WTC11 (cell line): ENCODE measurements at regions of chr15 and their contacts with region 1.

Region 1: DNA sequence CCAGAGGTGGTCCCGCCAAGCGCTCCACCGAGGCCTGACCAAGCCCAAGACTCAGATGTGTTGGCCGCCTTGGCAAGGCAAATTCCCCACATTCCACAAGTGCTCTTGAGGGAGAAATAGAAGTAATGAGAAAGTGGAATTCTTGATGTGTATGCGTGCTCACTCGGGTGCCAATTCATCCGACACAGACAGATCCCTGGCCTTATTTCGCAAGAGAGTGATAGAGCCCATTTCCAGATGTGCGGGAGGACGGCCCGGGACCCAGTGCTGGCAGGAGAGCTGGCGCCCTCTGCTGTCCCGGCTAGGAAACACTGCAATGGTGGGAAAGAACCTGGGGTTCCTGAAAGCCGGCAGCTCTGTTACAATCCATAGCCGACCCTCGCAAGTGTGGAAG is 76.0 kb downstream of the HMG20A start:
- DNase-seq: peak; percentile 91
- ATAC-seq: peak; percentile 87
- H3K4me3 Mint-ChIP-seq: no peak overlapping the region
- H3K27ac Mint-ChIP-seq: peak overlapping the region; percentile 91
- H3K4me1 Mint-ChIP-seq: peaks cover 57% of the 10 kb centered on the region
- H3K27me3 Mint-ChIP-seq: no peaks in the 10 kb centered on the region; the same call in 1 of the 2 replicates
- CTCF ChIP-seq: peak; percentile 91

Region 2: GRCh38 chr15:77107531-77108355 is 389.0 kb before region 1 on chr15:
- CTCF ChIA-PET with region 1: interaction called, 15 read pairs
- POLR2A ChIA-PET with region 1: no interaction called
- DNase-seq: peak; percentile 79
- ATAC-seq: peak; percentile 94
- H3K4me3 Mint-ChIP-seq: no peak overlapping the region
- H3K27ac Mint-ChIP-seq: peak overlapping the region; percentile 95
- H3K4me1 Mint-ChIP-seq: peaks cover 10% of the 10 kb centered on the region
- H3K27me3 Mint-ChIP-seq: no peaks in the 10 kb centered on the region
- CTCF ChIP-seq: peak; percentile 59

Region 3: GRCh38 chr15:77118882-77119321 is 377.8 kb before region 1 on chr15:
- CTCF ChIA-PET with region 1: interaction called, 49 read pairs
- POLR2A ChIA-PET with region 1: no interaction called
- DNase-seq: no peak
- ATAC-seq: peak; percentile 68
- H3K4me3 Mint-ChIP-seq: no peak overlapping the region
- H3K27ac Mint-ChIP-seq: no peak overlapping the region
- H3K4me1 Mint-ChIP-seq: peaks cover 28% of the 10 kb centered on the region
- H3K27me3 Mint-ChIP-seq: no peaks in the 10 kb centered on the region
- CTCF ChIP-seq: peak; percentile 35

Region 4: GRCh38 chr15:77358545-77359240 is 138.0 kb before region 1 on chr15:
- CTCF ChIA-PET with region 1: no interaction called
- POLR2A ChIA-PET with region 1: no interaction called
- DNase-seq: no peak
- ATAC-seq: no peak
- H3K4me3 Mint-ChIP-seq: no peak overlapping the region
- H3K27ac Mint-ChIP-seq: no peak overlapping the region
- H3K4me1 Mint-ChIP-seq: no peaks in the 10 kb centered on the region
- H3K27me3 Mint-ChIP-seq: no peaks in the 10 kb centered on the region
- CTCF ChIP-seq: no peak

Region 5: GRCh38 chr15:77419836-77420609 is 76.7 kb before region 1 on chr15 and contains the start of gene PEAK1:
- CTCF ChIA-PET with region 1: interaction called, 14 read pairs
- POLR2A ChIA-PET with region 1: no interaction called
- DNase-seq: peak; percentile 100
- ATAC-seq: peak; percentile 97
- H3K4me3 Mint-ChIP-seq: peak within 1 kb of the TSS; percentile 98
- H3K27ac Mint-ChIP-seq: peak within 1 kb of the TSS; percentile 99
- H3K4me1 Mint-ChIP-seq: peaks cover 46% of the 10 kb centered on the region
- H3K27me3 Mint-ChIP-seq: no peaks in the 10 kb centered on the region; the same call in 1 of the 2 replicates
- CTCF ChIP-seq: no peak
- total RNA-seq, gene PEAK1: 49.0 to 51.1 TPM (median 49.7 TPM) in 3 replicates

Region 6: GRCh38 chr15:77475898-77476297 is 20.8 kb before region 1 on chr15:
- CTCF ChIA-PET with region 1: interaction called, 11 read pairs
- POLR2A ChIA-PET with region 1: no interaction called
- DNase-seq: peak; percentile 34
- ATAC-seq: peak; percentile 85
- H3K4me3 Mint-ChIP-seq: no peak overlapping the region
- H3K27ac Mint-ChIP-seq: no peak overlapping the region
- H3K4me1 Mint-ChIP-seq: peaks cover 41% of the 10 kb centered on the region
- H3K27me3 Mint-ChIP-seq: no peaks in the 10 kb centered on the region
- CTCF ChIP-seq: no peak

Region 7: DNA sequence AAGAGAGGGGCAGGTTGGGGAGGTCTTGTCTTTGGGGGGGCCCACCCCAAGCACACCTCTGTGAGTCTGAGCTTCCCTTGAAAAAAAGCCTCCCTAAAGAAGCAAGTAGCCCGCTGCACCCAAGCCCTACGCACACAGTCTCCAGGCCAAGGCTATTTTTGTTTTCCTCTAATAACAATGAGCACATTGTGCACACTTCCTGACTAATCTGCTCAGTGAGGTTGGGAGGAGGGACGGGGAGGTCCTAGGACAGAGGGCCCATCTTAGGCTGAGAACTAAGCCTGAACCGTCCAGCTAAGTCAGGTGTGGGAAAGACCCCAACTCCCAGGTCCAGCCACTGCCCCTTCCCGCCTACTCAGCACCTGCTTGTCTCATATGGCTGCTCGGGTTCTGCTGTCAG is 11.2 kb after region 1 on chr15:
- CTCF ChIA-PET with region 1: interaction called, 67 read pairs
- POLR2A ChIA-PET with region 1: no interaction called
- DNase-seq: no peak
- ATAC-seq: no peak
- H3K4me3 Mint-ChIP-seq: no peak overlapping the region
- H3K27ac Mint-ChIP-seq: no peak overlapping the region
- H3K4me1 Mint-ChIP-seq: peaks cover 90% of the 10 kb centered on the region
- H3K27me3 Mint-ChIP-seq: no peaks in the 10 kb centered on the region
- CTCF ChIP-seq: no peak

Region 8: DNA sequence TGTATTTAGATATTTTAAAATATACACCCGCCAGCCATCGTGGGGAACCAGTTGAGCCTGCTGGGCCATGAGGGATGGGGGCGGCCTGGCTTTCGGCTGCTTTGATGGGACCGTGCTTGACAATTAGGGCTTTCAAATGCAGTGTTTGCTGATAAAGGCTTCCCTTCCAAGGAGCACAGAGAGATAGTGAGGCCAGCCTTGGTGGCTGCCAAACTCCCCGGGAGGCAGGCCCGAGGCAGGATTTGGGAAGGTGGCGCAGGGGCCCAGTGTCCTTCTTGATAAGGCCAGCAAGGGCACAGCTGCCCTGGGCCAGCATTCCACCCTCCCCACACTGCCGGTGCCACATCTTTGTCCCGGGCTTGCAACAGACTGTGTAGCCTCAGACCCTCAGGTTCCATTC is 60.4 kb after region 1 on chr15:
- CTCF ChIA-PET with region 1: no interaction called
- POLR2A ChIA-PET with region 1: no interaction called
- DNase-seq: no peak
- ATAC-seq: peak; percentile 60
- H3K4me3 Mint-ChIP-seq: no peak overlapping the region
- H3K27ac Mint-ChIP-seq: no peak overlapping the region
- H3K4me1 Mint-ChIP-seq: peaks cover 24% of the 10 kb centered on the region
- H3K27me3 Mint-ChIP-seq: no peaks in the 10 kb centered on the region; the same call in 1 of the 2 replicates
- CTCF ChIP-seq: no peak